Kidney (tissue), 22 donors: ENCODE measurements at regions of chr10 and their contacts with region 1.

Region 1: GRCh38 chr10:21265621-21266020 is 259.9 kb downstream of the SKIDA1 start:
- DNase-seq: no peak
- H3K4me3 ChIP-seq: no peak overlapping the region
- H3K27ac ChIP-seq: no peak overlapping the region
- H3K4me1 ChIP-seq: no peaks in the 10 kb centered on the region
- H3K27me3 ChIP-seq: no peaks in the 10 kb centered on the region
- CTCF ChIP-seq: no peak

Region 2: GRCh38 chr10:20858292-20859124 is 407.1 kb before region 1 on chr10:
- intact Hi-C with region 1: loop called (anchors 5 kb)
- DNase-seq: peak in 2 of 5 donors; percentile 62 to 64
- H3K4me3 ChIP-seq: no peak overlapping the region
- H3K27ac ChIP-seq: no peak overlapping the region
- H3K4me1 ChIP-seq: no peaks in the 10 kb centered on the region
- H3K27me3 ChIP-seq: no peaks in the 10 kb centered on the region
- CTCF ChIP-seq: no peak

Region 3: DNA sequence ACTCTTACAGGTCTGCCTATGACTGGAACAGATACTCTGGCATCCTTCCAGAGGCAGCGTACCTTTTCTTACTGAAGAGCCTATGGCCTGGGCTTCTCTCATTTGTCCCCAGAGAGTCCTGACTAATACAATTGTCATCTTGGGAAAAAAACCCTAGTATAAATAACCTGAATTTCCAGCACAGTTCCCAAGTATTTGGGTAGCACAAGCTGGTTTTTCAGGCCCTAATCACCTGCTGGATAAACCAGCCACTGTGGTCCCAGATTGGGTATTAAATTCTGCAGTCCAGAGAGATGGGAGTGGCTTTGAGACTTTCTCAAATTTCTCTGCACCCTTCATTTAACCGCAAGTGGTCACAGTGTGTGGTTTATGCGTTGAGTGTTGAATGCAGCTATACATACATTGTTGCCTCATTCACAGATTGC is 181.7 kb before region 1 on chr10:
- intact Hi-C with region 1: loop called (anchors 10 kb)
- DNase-seq: peak in 1 of 5 donors; percentile 17
- H3K4me3 ChIP-seq: no peak overlapping the region
- H3K27ac ChIP-seq: no peak overlapping the region
- H3K4me1 ChIP-seq: no peaks in the 10 kb centered on the region
- H3K27me3 ChIP-seq: no peaks in the 10 kb centered on the region
- CTCF ChIP-seq: no peak